Head of caudate nucleus (tissue), 42 donors: ENCODE measurements at regions of chr10 and their contacts with region 1.

Region 1: GRCh38 chr10:48656241-48656913 is 28.3 kb upstream of the WDFY4 start:
- DNase-seq: peak; percentile 78 to 97 (median 92)

Region 2: GRCh38 chr10:48363617-48364355 is 292.6 kb before region 1 on chr10:
- intact Hi-C with region 1: loop called (anchors 5 kb)
- DNase-seq: peak in 31 of 42 donors; percentile 2 to 75 (median 48)

Region 3: GRCh38 chr10:48551861-48552591 is 104.4 kb before region 1 on chr10:
- intact Hi-C with region 1: loop called (anchors 1 kb)
- DNase-seq: peak in 40 of 42 donors; percentile 27 to 82 (median 56)

Region 4: DNA sequence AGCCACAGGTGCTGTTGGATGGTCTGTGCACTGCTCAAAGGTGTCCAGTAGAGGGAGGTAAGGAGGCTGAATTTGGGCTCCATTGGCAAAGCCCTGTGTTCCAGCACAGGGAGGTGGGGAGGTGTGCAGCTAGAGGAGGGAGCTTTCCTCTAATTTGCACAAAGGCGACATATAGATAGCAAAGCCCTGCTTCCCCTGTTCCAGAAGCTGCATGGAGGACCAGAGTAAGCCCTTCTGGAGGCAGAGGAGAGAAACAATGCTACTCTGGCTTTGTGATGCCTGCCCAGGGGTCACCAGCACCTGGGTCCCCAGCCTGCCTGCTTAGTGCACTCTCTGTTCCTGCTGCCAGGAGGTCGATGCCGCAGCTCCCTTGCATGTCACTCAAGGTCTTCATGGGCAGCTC is 48.1 kb before region 1 on chr10:
- intact Hi-C with region 1: loop called (anchors 10 kb)
- DNase-seq: peak in 8 of 42 donors; percentile 16 to 62 (median 48)